Heart right ventricle (tissue), 16 donors: ENCODE measurements at regions of chr16 and their contacts with region 1.

Region 1: GRCh38 chr16:74143171-74143570 is 153.4 kb upstream of the PSMD7 start:
- DNase-seq: no peak
- ATAC-seq: no peak
- H3K4me3 ChIP-seq: no peak overlapping the region
- H3K27ac ChIP-seq: no peak overlapping the region
- H3K4me1 ChIP-seq: no peaks in the 10 kb centered on the region
- H3K27me3 ChIP-seq: no peaks in the 10 kb centered on the region
- CTCF ChIP-seq: no peak

Region 2: DNA sequence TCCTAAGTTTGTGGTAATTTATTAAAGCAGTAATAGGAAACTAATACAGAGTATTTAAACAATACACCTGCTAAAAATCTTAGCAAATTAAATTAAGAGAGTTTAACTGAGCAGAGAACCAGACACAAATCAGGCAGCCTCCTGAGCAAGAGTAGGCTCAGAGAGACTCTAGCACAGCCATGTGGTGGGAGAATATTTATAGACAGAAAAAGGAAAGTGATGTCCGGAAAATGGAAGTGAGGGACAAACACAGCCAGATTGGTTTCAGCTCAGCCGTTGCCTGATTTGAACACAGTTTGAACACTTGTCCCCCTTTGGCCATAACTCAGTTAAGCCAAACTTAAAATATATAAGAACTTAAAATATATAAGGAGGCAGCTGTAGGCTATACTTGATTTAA is 39.1 kb before region 1 on chr16:
- intact Hi-C with region 1: no loop called
- DNase-seq: no peak
- ATAC-seq: no peak
- H3K4me3 ChIP-seq: no peak overlapping the region
- H3K27ac ChIP-seq: no peak overlapping the region
- H3K4me1 ChIP-seq: no peaks in the 10 kb centered on the region
- H3K27me3 ChIP-seq: peaks cover 0 to 8% (median 0%) of the 10 kb centered on the region in 7 donors
- CTCF ChIP-seq: no peak

Region 3: GRCh38 chr16:74117798-74118197 is 25.4 kb before region 1 on chr16:
- intact Hi-C with region 1: loop called in 1 of 10 experiments (anchors 2 kb)
- DNase-seq: no peak
- ATAC-seq: no peak
- H3K4me3 ChIP-seq: no peak overlapping the region
- H3K27ac ChIP-seq: no peak overlapping the region
- H3K4me1 ChIP-seq: no peaks in the 10 kb centered on the region
- H3K27me3 ChIP-seq: peaks cover 0 to 6% (median 0%) of the 10 kb centered on the region in 7 donors
- CTCF ChIP-seq: no peak

Region 4: GRCh38 chr16:74216319-74216718 is 73.1 kb after region 1 on chr16:
- intact Hi-C with region 1: loop called in 1 of 10 experiments (anchors 10 kb)
- DNase-seq: no peak
- ATAC-seq: no peak
- H3K4me3 ChIP-seq: no peak overlapping the region
- H3K27ac ChIP-seq: no peak overlapping the region
- H3K4me1 ChIP-seq: no peaks in the 10 kb centered on the region
- H3K27me3 ChIP-seq: no peaks in the 10 kb centered on the region
- CTCF ChIP-seq: no peak